Naive thymus-derived CD4-positive, alpha-beta T cell (primary cell): ENCODE measurements at regions of chr16 and their contacts with region 1.

Region 1: GRCh38 chr16:81632392-81633146 is 146.5 kb upstream of the PLCG2 start:
- DNase-seq: peak; percentile 20 to 81 (median 73)
- ATAC-seq: peak; percentile 91
- H3K4me3 ChIP-seq: no peak overlapping the region
- H3K4me3 Mint-ChIP-seq: peak overlapping the region in 8 of 10 donors; percentile 0 to 71 (median 52)
- H3K27ac ChIP-seq: peak overlapping the region; percentile 56
- H3K27ac Mint-ChIP-seq: peak overlapping the region; percentile 53 to 99 (median 90)
- H3K4me1 ChIP-seq: peaks cover 18 to 20% of the 10 kb centered on the region in 2 donors
- H3K4me1 Mint-ChIP-seq: peaks cover 18 to 72% (median 52%) of the 10 kb centered on the region in 7 donors
- H3K27me3 ChIP-seq: no peaks in the 10 kb centered on the region
- H3K27me3 Mint-ChIP-seq: no peaks in the 10 kb centered on the region

Region 2: DNA sequence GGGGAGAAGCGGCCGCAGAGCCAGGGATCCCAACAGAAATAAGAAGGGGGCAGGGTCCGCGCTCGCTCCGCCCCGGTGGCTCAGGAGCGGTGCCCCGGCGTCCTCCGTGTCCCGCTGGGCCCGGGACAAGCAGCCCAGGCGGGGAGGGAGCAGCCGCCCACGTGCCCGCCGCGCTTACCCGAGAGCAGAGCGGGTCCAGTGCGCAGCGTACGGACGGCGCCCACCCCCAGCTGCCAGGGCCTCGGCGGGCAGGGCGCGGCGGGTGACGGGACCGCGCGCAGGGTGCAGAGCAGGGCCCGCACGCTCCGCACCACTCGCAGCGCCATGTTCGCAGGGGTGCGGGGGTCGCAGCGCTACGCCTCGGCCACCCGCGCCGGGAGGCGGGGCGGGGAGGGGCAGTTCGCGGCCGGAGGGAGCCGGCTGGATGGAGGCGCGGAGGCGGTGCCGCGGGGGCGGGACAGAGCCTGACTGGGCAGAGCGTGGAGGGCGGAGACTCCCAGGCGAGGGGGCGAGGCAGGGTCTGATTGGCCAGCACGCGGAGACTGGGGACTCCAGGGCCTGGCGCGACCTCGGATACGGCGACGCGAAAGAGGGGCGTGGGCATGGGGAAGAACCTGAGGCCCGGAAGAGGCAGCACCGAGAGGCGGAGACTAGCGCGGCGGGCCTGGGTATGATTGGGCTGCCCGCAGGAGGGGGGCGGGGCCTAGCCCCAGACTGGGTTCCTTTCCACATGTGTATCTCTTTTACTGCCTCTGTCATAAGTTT is 536.4 kb before region 1 on chr16 and contains the start of gene GCSH:
- CTCF ChIA-PET with region 1: no interaction called
- POLR2A ChIA-PET with region 1: no interaction called
- intact Hi-C with region 1: loop called in 1 of 2 experiments (anchors 5 kb)
- DNase-seq: peak; percentile 94 to 99 (median 98)
- ATAC-seq: peak; percentile 98
- H3K4me3 ChIP-seq: peak within 1 kb of the TSS; percentile 71
- H3K4me3 Mint-ChIP-seq: peak within 1 kb of the TSS; percentile 72 to 93 (median 82)
- H3K27ac ChIP-seq: peak within 1 kb of the TSS; percentile 67
- H3K27ac Mint-ChIP-seq: peak within 1 kb of the TSS; percentile 45 to 87 (median 71)
- H3K4me1 ChIP-seq: peaks cover 0 to 6% of the 10 kb centered on the region in 2 donors
- H3K4me1 Mint-ChIP-seq: peaks cover 3 to 19% (median 9%) of the 10 kb centered on the region in 7 donors
- H3K27me3 ChIP-seq: no peaks in the 10 kb centered on the region
- H3K27me3 Mint-ChIP-seq: no peaks in the 10 kb centered on the region
- total RNA-seq, gene GCSH: 1.5 to 7.5 (median 4.9) TPM

Region 3: DNA sequence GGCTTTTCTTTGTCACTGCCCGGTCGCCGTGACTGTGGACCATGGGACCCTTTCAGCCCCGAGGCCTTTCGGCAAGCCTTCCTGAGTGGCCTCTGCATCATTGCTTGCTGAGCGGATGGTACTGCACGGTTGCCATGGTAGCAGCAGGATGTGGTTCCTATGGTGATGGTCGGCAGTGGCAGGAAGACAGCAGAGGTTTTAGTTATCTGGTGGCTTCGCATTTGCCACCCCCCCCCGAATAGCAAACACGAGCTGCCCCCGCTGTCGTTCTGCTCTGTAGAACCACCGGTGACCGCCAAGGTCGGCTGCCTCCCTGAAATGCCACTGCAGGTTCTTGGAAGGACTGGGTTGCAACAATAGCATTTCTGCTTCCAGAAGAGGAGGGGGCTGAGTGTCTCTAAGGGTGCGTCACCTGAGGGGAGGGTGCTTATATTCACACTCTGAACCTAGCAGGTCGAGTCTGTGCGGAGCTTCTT is 111.4 kb before region 1 on chr16:
- CTCF ChIA-PET with region 1: no interaction called
- POLR2A ChIA-PET with region 1: no interaction called
- intact Hi-C with region 1: loop called in 1 of 2 experiments (anchors 2 kb)
- DNase-seq: peak; percentile 34 to 79 (median 65)
- ATAC-seq: peak; percentile 70
- H3K4me3 ChIP-seq: no peak overlapping the region
- H3K4me3 Mint-ChIP-seq: peak overlapping the region in 1 of 10 donors; percentile 48
- H3K27ac ChIP-seq: no peak overlapping the region
- H3K27ac Mint-ChIP-seq: peak overlapping the region; percentile 43 to 90 (median 68)
- H3K4me1 ChIP-seq: peaks cover 7 to 52% of the 10 kb centered on the region in 2 donors
- H3K4me1 Mint-ChIP-seq: peaks cover 14 to 61% (median 25%) of the 10 kb centered on the region in 7 donors
- H3K27me3 ChIP-seq: no peaks in the 10 kb centered on the region
- H3K27me3 Mint-ChIP-seq: no peaks in the 10 kb centered on the region

Region 4: GRCh38 chr16:81715358-81716196 is 83.0 kb after region 1 on chr16:
- CTCF ChIA-PET with region 1: no interaction called
- POLR2A ChIA-PET with region 1: interaction called, 3 read pairs
- intact Hi-C with region 1: loop called (anchors 1 to 2 kb)
- DNase-seq: peak in 7 of 9 donors; percentile 47 to 70 (median 68)
- ATAC-seq: peak; percentile 73
- H3K4me3 ChIP-seq: peak overlapping the region; percentile 7
- H3K4me3 Mint-ChIP-seq: peak overlapping the region; percentile 53 to 83 (median 75)
- H3K27ac ChIP-seq: no peak overlapping the region
- H3K27ac Mint-ChIP-seq: peak overlapping the region; percentile 66 to 96 (median 88)
- H3K4me1 ChIP-seq: peaks cover 25 to 35% of the 10 kb centered on the region in 2 donors
- H3K4me1 Mint-ChIP-seq: peaks cover 35 to 54% (median 43%) of the 10 kb centered on the region in 7 donors
- H3K27me3 ChIP-seq: no peaks in the 10 kb centered on the region
- H3K27me3 Mint-ChIP-seq: no peaks in the 10 kb centered on the region

Region 5: DNA sequence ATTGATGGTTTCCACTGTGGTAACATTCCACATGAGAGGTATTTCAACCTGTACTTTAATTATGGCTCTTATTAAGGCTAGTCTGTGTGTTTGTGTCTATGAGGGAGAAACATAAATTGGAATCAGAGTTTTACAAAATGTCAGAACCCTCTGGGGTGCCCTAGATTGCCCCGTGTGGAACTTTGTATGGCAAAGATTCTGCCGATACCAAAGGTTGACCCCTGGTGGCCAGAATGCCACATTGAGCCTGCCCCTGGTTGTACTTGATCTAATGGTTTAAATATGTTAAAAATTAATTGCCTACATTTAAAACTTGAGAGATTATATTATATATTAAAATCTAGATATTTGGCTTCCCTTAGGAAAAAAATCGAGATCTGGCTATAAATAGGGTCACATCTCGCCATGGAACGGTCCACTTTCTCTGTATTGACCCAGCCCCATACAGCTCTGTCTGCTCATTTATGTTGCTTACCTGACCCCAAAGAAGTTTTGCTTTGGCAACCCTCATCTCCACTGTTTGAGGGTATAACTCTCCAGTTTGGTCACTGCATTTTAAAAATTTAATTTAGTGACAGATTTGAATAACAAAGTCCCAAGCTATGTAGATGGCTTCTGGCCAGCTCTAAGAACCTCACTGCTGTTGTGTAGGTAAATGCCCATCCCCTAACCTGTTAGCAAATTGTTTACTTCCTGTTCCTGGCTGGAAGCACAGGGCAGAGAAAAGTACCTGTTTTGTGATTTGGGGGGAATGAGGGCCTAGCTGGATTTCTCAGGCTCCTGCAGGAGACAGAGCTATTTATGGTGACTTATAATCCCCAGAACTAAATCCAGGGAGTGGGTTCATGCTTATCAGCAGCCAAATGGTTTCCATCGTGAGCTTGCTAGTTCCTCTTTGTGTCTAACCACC is 241.5 kb after region 1 on chr16:
- CTCF ChIA-PET with region 1: no interaction called
- POLR2A ChIA-PET with region 1: no interaction called
- intact Hi-C with region 1: loop called in 1 of 2 experiments (anchors 10 kb)
- DNase-seq: peak in 5 of 9 donors; percentile 5 to 47 (median 17)
- ATAC-seq: peak; percentile 82
- H3K4me3 ChIP-seq: no peak overlapping the region
- H3K4me3 Mint-ChIP-seq: no peak overlapping the region
- H3K27ac ChIP-seq: no peak overlapping the region
- H3K27ac Mint-ChIP-seq: no peak overlapping the region
- H3K4me1 ChIP-seq: peaks cover 0 to 6% of the 10 kb centered on the region in 2 donors
- H3K4me1 Mint-ChIP-seq: peaks cover 0 to 14% (median 3%) of the 10 kb centered on the region in 7 donors
- H3K27me3 ChIP-seq: no peaks in the 10 kb centered on the region
- H3K27me3 Mint-ChIP-seq: peaks cover 0 to 6% (median 0%) of the 10 kb centered on the region in 5 donors